Activated CD8-positive, alpha-beta T cell treated with anti-CD3 and anti-CD28 coated beads, Interleukin-2, amount 10 ng/mL, durations not matched to agents 7 days and 5 days (primary cell): ENCODE measurements at regions of chr3 and their contacts with region 1.

Region 1: DNA sequence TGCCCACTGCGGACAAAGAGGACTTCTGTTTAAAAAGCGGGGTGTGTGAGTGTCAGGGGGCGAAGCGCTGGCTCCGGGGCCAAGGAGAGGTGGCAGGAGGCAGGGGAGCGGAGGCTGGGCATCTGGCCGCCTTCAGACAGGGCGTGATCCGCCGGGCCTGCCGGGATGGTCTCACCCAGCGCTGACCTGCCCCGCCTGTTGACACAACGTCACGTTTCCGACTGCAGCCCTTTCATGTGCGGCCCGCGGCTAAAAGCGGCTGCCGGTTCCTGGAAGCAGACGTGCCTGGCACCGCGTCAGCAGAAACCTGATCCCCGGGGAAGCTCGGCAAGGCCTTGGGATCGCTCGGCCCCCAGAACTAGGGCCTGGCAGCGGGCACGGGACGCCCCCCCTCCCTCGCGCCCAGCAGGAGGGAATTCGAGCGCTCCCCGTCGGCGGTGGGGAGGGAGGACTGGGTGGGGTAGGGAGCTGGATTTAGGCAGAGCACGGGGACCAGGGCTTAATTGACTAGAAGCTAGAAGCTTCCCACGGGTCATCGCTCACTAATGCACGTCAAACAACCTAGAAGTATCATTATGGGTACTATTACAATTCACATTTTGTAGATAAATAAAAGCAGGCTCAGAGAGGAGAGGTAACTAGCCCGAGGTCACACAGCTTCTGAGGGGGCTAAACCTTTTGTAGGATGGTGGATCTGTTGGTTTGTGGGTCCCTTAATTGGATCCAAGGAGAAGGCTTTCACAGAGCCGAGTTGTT is 7.7 kb downstream of the BHLHE40 start:
- DNase-seq: peak; percentile 89
- ATAC-seq: peak; percentile 77
- H3K4me3 Mint-ChIP-seq: peak overlapping the region; percentile 91
- H3K27ac Mint-ChIP-seq: peak overlapping the region; percentile 92
- H3K4me1 Mint-ChIP-seq: peaks cover 64% of the 10 kb centered on the region
- H3K27me3 Mint-ChIP-seq: no peaks in the 10 kb centered on the region

Region 2: DNA sequence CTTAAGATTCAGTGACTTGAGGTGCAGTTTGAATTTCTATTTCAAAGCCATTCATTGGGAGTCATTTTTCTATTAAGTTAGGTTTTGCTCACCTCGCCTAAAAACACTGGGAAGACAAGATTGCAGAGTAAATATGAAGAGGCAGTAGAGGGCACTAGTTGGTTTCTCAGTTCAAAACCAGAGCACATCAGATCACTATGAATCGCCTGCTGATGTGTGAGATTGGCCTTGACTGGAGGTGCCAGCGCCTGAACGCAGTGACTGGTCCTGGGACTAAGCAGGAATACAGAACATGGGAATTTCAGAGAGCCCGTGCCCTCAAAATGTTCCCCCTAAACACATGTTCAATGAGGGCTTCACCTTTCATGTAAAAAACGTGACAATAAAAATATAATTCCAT is 264.9 kb before region 1 on chr3:
- CTCF ChIA-PET with region 1: interaction called, 258 read pairs
- POLR2A ChIA-PET with region 1: interaction called, 6 read pairs
- DNase-seq: peak; percentile 61
- ATAC-seq: peak; percentile 85
- H3K4me3 Mint-ChIP-seq: no peak overlapping the region
- H3K27ac Mint-ChIP-seq: peak overlapping the region; percentile 66
- H3K4me1 Mint-ChIP-seq: peaks cover 62% of the 10 kb centered on the region
- H3K27me3 Mint-ChIP-seq: no peaks in the 10 kb centered on the region

Region 3: DNA sequence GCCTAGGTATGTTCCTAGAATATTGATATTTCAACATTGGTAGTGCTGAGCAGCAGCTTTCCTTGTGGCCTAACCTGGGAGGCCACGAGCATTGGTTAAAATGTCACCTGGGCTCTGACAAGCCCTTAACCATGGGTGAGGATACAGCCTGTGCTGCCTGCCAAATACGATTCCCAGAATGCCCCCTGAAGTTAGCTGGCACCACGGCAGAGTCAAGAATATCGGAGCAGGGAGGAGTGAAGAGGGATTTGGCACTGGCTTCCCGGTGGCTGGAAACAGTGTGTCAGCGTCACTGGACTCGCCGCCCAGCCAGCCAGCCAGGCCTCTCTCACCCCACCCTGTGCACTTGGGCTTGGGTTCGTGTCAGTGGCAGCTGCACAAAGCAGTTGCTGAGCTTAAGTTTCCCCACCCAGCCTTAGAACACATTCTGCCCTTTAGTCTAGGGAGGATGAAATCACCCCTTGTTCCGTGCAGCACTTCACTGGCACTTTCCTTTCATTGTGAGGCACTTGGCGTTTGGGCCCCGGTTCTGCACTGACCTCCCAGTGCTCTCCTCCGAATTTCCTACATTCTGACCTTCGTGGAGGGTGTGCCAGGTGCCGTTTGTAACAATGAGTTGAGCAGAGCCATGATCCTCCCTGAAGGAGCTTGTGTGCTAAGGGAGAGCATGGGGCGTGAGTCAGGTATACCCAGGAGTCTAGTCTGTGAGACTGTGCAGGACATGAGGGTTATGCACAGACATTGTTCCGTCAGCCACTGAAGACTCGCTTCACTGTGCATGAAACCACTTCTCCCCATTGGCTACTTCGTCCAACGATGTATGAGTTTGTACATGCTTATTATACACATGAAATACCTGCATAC is 160.5 kb before region 1 on chr3:
- CTCF ChIA-PET with region 1: interaction called, 272 read pairs
- POLR2A ChIA-PET with region 1: interaction called, 737 read pairs
- DNase-seq: no peak
- ATAC-seq: no peak
- H3K4me3 Mint-ChIP-seq: peak overlapping the region; percentile 78
- H3K27ac Mint-ChIP-seq: peak overlapping the region; percentile 86
- H3K4me1 Mint-ChIP-seq: peaks cover 94% of the 10 kb centered on the region
- H3K27me3 Mint-ChIP-seq: no peaks in the 10 kb centered on the region

Region 4: GRCh38 chr3:4845882-4846281 is 141.1 kb before region 1 on chr3:
- CTCF ChIA-PET with region 1: interaction called, 11 read pairs
- POLR2A ChIA-PET with region 1: interaction called, 737 read pairs
- DNase-seq: no peak
- ATAC-seq: peak; percentile 65
- H3K4me3 Mint-ChIP-seq: peak overlapping the region; percentile 36
- H3K27ac Mint-ChIP-seq: peak overlapping the region; percentile 87
- H3K4me1 Mint-ChIP-seq: peaks cover 97% of the 10 kb centered on the region
- H3K27me3 Mint-ChIP-seq: no peaks in the 10 kb centered on the region

Region 5: GRCh38 chr3:5002174-5002870 is 15.4 kb after region 1 on chr3:
- CTCF ChIA-PET with region 1: interaction called, 19 read pairs
- POLR2A ChIA-PET with region 1: interaction called, 450 read pairs
- DNase-seq: peak; percentile 66
- ATAC-seq: peak; percentile 50
- H3K4me3 Mint-ChIP-seq: peak overlapping the region; percentile 47
- H3K27ac Mint-ChIP-seq: peak overlapping the region; percentile 84
- H3K4me1 Mint-ChIP-seq: peaks cover 85% of the 10 kb centered on the region
- H3K27me3 Mint-ChIP-seq: no peaks in the 10 kb centered on the region

Region 6: GRCh38 chr3:5016218-5017161 is 29.5 kb after region 1 on chr3:
- CTCF ChIA-PET with region 1: interaction called, 123 read pairs
- POLR2A ChIA-PET with region 1: interaction called, 450 read pairs
- DNase-seq: peak; percentile 71
- ATAC-seq: peak; percentile 62
- H3K4me3 Mint-ChIP-seq: peak overlapping the region; percentile 35
- H3K27ac Mint-ChIP-seq: peak overlapping the region; percentile 86
- H3K4me1 Mint-ChIP-seq: peaks cover 96% of the 10 kb centered on the region
- H3K27me3 Mint-ChIP-seq: no peaks in the 10 kb centered on the region

Region 7: GRCh38 chr3:5057857-5058324 is 70.9 kb after region 1 on chr3:
- CTCF ChIA-PET with region 1: interaction called, 50 read pairs
- POLR2A ChIA-PET with region 1: interaction called, 14 read pairs
- DNase-seq: peak; percentile 90
- ATAC-seq: peak; percentile 95
- H3K4me3 Mint-ChIP-seq: no peak overlapping the region
- H3K27ac Mint-ChIP-seq: no peak overlapping the region
- H3K4me1 Mint-ChIP-seq: peaks cover 59% of the 10 kb centered on the region
- H3K27me3 Mint-ChIP-seq: peaks cover 7% of the 10 kb centered on the region

Region 8: DNA sequence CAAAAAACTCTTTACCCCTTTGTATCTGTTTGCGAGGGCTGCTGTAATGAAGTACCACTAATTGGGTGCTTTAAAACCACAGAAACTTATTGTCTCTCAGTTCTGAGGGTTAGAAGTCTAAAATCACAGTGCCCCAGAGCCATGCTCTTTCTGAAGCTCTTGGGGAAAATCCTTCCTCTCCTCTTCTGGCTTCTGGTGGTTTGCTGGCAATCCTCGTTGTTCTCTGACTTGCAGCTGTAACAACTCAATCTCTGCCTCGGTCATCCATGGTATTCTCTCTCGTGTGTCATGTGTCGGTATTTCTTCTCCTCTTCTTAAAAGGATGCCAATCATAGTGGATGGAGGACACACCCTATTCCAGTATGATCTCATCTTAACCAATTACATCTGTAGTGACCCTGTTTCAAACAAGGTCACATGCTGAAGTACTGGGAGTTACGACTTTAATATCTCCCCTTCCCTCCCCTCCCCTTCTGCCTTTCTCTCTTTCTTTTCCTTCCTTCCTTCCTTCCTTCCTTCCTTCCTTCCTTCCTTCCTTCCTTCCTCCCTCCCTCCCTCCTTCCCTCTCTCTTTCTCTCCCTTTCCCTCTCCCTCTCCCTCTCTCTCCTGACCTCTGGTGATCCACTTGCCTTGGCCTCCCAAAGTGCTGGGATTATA is 128.7 kb after region 1 on chr3:
- CTCF ChIA-PET with region 1: no interaction called
- POLR2A ChIA-PET with region 1: no interaction called
- DNase-seq: no peak
- ATAC-seq: no peak
- H3K4me3 Mint-ChIP-seq: no peak overlapping the region
- H3K27ac Mint-ChIP-seq: no peak overlapping the region
- H3K4me1 Mint-ChIP-seq: no peaks in the 10 kb centered on the region
- H3K27me3 Mint-ChIP-seq: no peaks in the 10 kb centered on the region